Left colon (tissue), 2 donors: ENCODE measurements at regions of chr5 and their contacts with region 1.

Region 1: GRCh38 chr5:114101153-114101552 is 260.7 kb upstream of the KCNN2 start:
- DNase-seq: no peak
- ATAC-seq: peak; percentile 47

Region 2: GRCh38 chr5:114249823-114250222 is 148.7 kb after region 1 on chr5:
- intact Hi-C with region 1: no loop called
- DNase-seq: no peak
- ATAC-seq: no peak

Region 3: DNA sequence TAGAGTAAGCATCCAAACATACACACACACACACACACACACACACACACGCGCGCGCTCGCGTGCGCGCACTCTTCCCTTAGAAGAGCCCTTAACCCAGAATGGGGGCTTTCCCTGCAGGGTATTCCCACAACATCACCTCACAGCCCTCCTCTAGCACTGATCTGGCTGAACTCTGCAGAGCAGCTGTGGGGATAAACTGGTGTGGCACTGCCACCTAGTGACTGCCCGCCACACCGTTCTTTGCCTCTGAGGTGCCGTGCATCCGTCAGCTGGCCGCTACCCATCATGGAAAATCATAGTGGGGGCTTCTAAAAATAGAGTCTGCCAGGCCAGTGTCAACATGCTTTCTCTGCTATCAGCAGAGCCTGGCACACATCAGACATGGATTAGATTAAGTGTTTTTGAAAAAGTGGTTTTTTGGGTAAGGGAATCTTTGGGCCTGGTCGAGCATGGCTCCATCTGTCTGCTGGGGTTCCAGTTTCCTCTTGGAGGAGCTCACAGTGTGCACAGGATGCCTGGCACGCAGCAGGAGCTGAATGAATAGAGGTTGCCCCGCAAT is 348.8 kb after region 1 on chr5:
- intact Hi-C with region 1: loop called in 1 of 2 experiments (anchors 10 kb)
- DNase-seq: peak; percentile 43 to 71
- ATAC-seq: peak; percentile 98